Left ventricle myocardium superior (tissue), 1 donor: ENCODE measurements at regions of chr4 and their contacts with region 1.

Region 1: GRCh38 chr4:89226665-89227574 is 80.7 kb downstream of the GPRIN3 start:
- DNase-seq: peak; percentile 67
- ATAC-seq: peak; percentile 98

Region 2: GRCh38 chr4:89410687-89411086 is 183.8 kb after region 1 on chr4:
- intact Hi-C with region 1: no loop called
- DNase-seq: no peak
- ATAC-seq: no peak

Region 3: DNA sequence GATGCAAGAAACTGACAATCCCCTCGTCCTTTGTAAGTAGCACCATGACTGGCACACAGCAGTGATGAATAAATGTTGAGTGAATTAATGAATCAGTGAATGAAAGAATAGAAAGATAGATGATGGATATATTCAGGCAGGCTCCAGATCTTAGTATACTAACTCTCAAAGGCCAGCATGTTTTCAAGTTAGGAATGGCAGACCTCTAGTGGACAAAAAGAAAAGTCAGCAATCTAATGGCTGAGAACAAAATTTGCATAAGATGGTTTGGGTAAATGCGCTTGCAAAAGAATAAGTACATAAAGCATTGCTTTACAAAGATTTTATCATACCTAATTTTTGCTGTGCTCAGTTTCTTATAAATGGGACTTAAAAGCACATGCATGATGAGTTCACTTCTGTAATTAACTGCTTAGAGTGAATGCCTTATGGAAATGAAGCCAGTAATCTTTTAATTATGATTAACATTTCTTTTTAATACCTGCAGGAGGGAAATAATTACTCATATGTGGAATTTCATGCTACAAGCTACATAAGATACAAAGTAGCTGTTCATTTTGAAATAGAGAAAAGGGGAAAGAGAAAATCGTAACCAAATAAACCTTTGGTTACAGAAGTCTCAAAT is 207.6 kb after region 1 on chr4:
- intact Hi-C with region 1: loop called (anchors 1 kb)
- DNase-seq: no peak
- ATAC-seq: peak; percentile 62